Tibial artery (tissue), 4 donors: ENCODE measurements at regions of chr3 and their contacts with region 1.

Region 1: GRCh38 chr3:69484507-69485393 is 98.9 kb upstream of the FRMD4B start:
- DNase-seq: no peak
- H3K4me3 ChIP-seq: no peak overlapping the region
- H3K27ac ChIP-seq: no peak overlapping the region
- H3K4me1 ChIP-seq: no peaks in the 10 kb centered on the region
- H3K27me3 ChIP-seq: peaks cover 0 to 10% of the 10 kb centered on the region in 2 donors
- CTCF ChIP-seq: no peak

Region 2: GRCh38 chr3:69524816-69525215 is 40.1 kb after region 1 on chr3:
- intact Hi-C with region 1: loop called (anchors 1 kb)
- DNase-seq: no peak
- H3K4me3 ChIP-seq: no peak overlapping the region
- H3K27ac ChIP-seq: no peak overlapping the region
- H3K4me1 ChIP-seq: no peaks in the 10 kb centered on the region
- H3K27me3 ChIP-seq: no peaks in the 10 kb centered on the region
- CTCF ChIP-seq: no peak

Region 3: DNA sequence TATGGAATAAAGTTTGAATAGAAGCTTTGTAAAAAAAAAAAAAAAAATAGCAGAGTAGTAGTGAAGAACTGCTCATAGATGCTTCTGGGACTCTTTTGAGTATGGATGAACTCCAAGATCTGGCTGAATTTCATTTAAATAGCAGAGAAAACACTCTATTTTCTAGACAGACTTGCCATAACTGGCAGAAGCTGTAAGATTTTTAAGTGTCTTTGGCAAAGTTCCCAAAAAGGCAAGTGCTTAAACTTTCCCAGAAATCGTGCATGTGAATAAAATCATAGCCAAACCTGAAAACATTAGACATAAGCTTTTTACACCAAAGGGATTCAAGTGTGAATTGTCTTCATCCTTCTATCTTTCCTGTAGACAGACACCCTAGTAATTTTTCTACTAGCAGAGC is 144.2 kb after region 1 on chr3:
- intact Hi-C with region 1: no loop called
- DNase-seq: no peak
- H3K4me3 ChIP-seq: no peak overlapping the region
- H3K27ac ChIP-seq: no peak overlapping the region
- H3K4me1 ChIP-seq: no peaks in the 10 kb centered on the region
- H3K27me3 ChIP-seq: no peaks in the 10 kb centered on the region
- CTCF ChIP-seq: no peak